ENCODE measurements at regions of chr1 and their contacts with region 1.

Region 1: DNA sequence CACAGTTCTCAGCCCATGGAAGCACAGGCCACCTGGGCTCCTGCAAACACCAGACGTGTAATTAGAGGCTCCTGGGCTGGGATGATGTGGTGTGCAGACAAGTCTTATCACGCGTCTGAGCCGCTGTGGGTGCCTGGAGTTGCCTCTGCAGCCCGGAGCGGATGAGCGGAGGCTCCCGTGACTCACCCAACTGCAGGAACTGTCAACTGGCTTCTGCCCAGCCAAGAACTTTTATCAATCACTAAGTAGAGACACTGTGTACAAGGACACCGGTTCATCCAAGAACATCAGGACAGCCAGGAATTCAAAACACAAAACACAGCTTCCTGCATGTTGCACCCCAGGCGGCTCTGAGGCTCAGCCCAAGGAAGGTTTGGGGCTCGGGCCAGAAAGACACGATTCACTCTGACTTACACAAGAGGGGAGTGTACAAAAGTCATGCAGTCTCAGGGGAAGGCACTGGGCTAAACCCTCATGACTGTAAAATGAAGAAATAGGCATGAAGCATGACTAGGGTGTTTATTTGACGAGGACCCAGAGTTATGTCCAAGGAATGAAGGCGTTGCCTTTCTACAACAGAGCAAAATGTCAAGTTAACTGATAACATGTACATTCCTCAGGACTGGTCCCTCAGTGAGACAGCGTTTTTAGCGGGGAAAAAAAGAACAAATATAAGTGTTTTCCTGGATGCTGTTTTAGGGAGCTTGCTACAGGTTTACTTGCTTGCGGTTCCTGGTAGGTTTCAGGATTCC is 21.1 kb downstream of the ERRFI1 start:
- DNase-seq: peak; percentile 83 to 96 (median 91)
- H3K4me3 ChIP-seq: peak overlapping the region; percentile 7
- H3K27ac ChIP-seq: peak overlapping the region; percentile 23 to 76
- H3K4me1 ChIP-seq: peaks cover 22% of the 10 kb centered on the region
- H3K27me3 ChIP-seq: no peaks in the 10 kb centered on the region
- CTCF ChIP-seq: no peak
- EP300 ChIP-seq: peak; percentile 79
- POLR2A ChIP-seq: no peak

Region 2: DNA sequence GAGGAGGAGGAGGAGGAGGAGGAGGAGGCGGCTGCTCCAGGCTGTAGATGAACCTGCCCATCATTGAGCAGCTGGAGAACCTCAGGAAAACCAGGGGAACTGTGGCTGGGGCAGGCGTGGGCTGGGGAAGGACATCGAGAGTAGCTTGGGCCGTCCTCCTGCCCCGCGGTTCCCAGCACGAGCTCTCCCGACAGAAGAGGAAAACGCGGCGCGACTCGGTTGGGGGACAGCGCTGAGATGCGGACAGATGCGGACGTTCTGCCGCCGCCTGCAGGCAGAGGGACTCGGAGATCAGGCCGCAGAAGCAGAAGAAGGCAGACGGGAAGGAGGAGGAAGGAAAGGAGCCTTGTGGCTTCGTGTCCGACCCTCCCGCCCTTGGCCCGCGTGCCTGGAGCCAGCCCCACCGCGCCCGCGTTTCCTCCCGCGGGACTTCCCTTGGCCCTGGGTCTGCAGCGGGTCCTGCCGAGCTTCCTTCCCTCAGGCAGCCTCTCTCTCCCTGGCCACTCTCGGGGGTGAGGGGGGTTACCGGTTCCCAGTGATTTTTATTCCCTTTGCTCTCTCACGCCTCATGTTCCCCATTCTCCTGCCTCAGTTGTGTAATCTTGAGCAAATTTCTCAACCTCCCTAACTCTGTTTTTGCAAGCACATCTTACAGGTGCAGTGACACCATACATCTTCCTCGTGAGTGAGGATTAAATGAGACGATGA is 62.6 kb before region 1 on chr1:
- intact Hi-C with region 1: no loop called
- DNase-seq: peak; percentile 35 to 65 (median 56)
- H3K4me3 ChIP-seq: peak overlapping the region; percentile 4
- H3K27ac ChIP-seq: no peak overlapping the region
- H3K4me1 ChIP-seq: peaks cover 3% of the 10 kb centered on the region
- H3K27me3 ChIP-seq: no peaks in the 10 kb centered on the region
- CTCF ChIP-seq: no peak
- EP300 ChIP-seq: no peak
- POLR2A ChIP-seq: no peak

Region 3: DNA sequence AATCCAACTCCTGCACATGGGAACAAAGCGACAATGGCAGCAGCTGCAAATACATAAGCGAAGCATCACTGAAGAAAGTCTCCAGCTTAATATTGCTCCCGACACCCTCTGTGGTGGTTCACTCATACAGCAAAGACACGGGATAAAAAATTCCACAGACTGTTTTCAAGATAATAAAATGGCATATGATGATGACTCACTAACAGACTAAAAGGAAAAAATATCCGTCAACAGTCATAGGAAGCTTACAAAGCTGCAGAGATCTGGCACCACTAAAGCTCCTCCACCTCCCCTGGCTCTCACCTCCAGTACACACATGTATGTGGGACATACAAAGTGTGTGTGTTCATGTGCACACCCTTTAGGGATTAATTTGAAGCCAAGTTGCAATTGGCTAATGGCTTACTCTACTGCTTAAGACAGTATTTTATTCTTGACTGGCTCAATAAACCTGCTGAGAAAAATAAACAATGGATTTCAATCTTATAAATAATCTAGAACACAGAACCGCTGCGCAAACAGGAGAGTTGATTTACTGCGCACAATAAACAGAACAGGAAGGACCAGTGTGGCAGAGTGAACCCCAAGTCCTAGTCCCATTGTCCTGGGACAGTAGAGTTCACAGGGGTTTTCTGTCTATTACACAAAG is 407.3 kb after region 1 on chr1:
- intact Hi-C with region 1: no loop called
- DNase-seq: no peak
- H3K4me3 ChIP-seq: no peak overlapping the region
- H3K27ac ChIP-seq: no peak overlapping the region
- H3K4me1 ChIP-seq: peaks cover 40% of the 10 kb centered on the region
- H3K27me3 ChIP-seq: no peaks in the 10 kb centered on the region
- CTCF ChIP-seq: no peak
- EP300 ChIP-seq: no peak
- POLR2A ChIP-seq: no peak

Region 4: DNA sequence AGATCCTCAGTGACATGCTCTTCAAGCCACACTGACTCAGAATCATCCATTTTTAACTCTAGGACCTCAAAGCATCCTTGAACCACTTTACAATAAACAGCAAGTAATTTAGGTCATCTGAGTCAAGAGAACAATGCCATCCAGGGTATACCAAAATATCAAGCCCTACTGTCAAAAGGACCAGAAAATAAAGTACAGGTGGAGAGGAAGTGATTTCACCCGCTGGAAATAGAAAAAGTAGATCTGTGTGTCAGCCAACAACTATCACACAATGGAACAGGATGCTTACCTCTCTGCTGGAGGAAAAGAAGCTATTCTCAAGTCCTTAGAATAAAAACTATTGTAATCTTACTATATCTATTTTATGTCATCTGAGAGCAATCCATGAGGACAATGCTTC is 775.4 kb after region 1 on chr1:
- intact Hi-C with region 1: no loop called
- DNase-seq: no peak
- H3K4me3 ChIP-seq: no peak overlapping the region
- H3K27ac ChIP-seq: no peak overlapping the region
- H3K4me1 ChIP-seq: peaks cover 3% of the 10 kb centered on the region
- H3K27me3 ChIP-seq: no peaks in the 10 kb centered on the region
- CTCF ChIP-seq: no peak
- EP300 ChIP-seq: no peak
- POLR2A ChIP-seq: no peak

Region 5: DNA sequence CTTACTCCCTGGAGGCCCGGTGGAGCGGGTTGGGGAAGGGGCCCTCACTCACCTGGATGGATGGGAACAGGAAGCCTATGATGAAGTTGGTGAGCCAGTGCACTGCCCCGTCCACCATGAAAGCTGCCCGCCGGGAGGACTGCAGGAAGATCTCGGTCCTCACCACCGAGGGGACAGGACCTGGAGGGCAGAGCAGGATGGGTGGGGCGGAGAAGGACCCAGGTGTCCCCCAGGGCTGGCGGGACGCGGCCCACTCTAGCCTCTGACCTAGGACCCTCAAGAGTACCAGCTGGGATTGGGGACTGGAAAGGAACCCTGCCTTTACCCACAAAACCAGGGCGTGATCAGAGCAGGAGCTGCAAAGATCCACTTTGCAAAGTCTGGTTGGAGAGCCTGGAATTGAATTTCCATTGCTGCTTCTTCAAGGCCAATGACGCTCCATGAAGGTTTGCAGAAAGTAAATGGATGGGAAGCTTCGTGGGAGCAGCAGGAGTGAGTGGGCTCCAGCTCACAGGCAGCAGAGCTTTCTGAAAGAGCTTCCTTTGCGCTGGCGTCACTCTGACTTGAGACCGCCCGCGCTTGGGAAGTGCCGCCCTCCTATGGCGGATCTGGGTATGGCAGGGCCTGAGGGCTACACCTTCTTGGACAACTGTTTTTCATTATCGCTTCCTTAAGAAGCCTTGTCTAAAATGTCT is 999.9 kb after region 1 on chr1:
- intact Hi-C with region 1: loop called in 1 of 4 experiments (anchors 10 kb)
- DNase-seq: peak; percentile 63 to 85 (median 79)
- H3K4me3 ChIP-seq: no peak overlapping the region
- H3K27ac ChIP-seq: no peak overlapping the region
- H3K4me1 ChIP-seq: no peaks in the 10 kb centered on the region
- H3K27me3 ChIP-seq: no peaks in the 10 kb centered on the region
- CTCF ChIP-seq: peak; percentile 66 to 83 (median 72)
- EP300 ChIP-seq: no peak
- POLR2A ChIP-seq: no peak

Measured in ovary (tissue), 10 donors.